Dorsolateral prefrontal cortex (tissue), 120 donors: ENCODE measurements at regions of chr7 and their contacts with region 1.

Region 1: GRCh38 chr7:70693686-70694360 is 438.1 kb upstream of the GALNT17 start:
- DNase-seq: peak; percentile 21 to 72 (median 52)
- H3K4me3 ChIP-seq: peak overlapping the region; percentile 49 to 83 (median 72)
- H3K27ac ChIP-seq: peak overlapping the region in 46 of 59 donors; percentile 3 to 87 (median 53)
- H3K27me3 ChIP-seq: no peaks in the 10 kb centered on the region
- CTCF ChIP-seq: peak in 25 of 56 donors; percentile 8 to 41 (median 24)

Region 2: DNA sequence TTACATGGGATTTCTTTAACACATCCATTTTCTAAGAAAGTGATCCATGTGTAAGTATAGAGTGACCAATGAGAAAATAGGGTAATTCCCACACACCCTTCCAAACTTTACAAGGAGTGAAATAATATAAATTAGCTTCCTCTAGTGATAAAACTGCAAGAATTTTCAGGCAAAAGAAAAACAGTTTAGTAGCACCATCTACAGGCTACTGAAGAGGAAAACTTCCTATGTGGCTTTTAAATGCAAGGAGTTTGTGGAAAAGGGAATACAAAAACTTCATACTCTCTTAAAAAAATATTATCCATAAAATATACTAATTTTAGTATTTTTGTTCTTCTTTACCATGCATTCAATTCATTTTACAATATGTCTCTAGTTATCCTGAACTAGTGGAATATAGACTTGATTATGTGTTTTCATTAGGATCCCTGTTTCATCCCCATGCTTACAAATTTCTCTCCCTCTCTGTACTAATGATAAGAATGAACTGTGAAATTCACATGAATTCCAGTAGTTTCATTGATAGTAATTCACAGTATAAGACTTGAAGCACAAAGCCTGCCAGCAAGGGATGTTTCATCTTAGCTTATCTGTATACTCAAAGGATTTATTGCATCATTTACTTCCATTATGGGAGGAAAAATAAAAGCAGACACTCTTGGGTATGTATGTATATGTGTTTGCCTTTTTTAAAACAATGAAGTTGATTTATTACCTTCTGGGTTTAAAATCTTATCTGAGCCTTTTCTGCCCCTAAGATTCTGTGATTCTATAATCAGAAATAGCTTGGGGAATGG is 652.7 kb before region 1 on chr7:
- intact Hi-C with region 1: loop called (anchors 5 kb)
- DNase-seq: no peak
- H3K4me3 ChIP-seq: no peak overlapping the region
- H3K27ac ChIP-seq: no peak overlapping the region
- H3K27me3 ChIP-seq: no peaks in the 10 kb centered on the region
- CTCF ChIP-seq: peak in 54 of 56 donors; percentile 42 to 83 (median 62)

Region 3: DNA sequence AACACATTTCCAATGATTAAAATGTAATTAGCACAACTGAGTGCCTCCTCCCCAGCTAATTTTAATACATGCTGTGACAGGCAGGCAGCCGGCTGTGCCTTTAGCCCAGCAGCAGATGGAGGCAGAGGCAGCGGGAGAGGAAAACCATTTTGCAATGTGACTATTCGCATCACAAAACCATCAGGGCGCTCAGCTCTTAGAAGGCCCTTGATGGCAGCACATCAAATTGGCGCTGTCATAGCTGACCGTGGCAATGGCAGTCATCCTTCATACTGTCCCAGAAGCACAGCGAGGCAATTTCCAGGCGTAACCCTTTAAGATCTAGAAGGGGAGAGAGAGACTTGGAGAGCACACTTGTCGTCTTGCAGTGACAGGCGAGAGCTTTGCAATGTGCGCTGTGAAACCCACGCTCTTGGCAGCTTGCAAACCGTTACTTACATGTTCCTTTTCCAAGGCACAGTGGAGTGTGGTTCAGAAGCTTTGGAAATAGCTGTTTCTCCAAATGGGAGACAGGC is 276.6 kb before region 1 on chr7:
- intact Hi-C with region 1: loop called (anchors 10 kb)
- DNase-seq: peak; percentile 23 to 89 (median 66)
- H3K4me3 ChIP-seq: no peak overlapping the region
- H3K27ac ChIP-seq: peak overlapping the region in 47 of 59 donors; percentile 6 to 83 (median 59)
- H3K27me3 ChIP-seq: no peaks in the 10 kb centered on the region
- CTCF ChIP-seq: peak in 30 of 56 donors; percentile 10 to 50 (median 19)